T-cell (primary cell): ENCODE measurements at regions of chr1 and their contacts with region 1.

Region 1: GRCh38 chr1:212012034-212012740 is 23.2 kb downstream of the INTS7 start:
- DNase-seq: peak; percentile 14 to 79 (median 50)
- ATAC-seq: peak; percentile 90 to 99 (median 92)
- H3K4me3 ChIP-seq: no peak overlapping the region
- H3K4me3 Mint-ChIP-seq: no peak overlapping the region
- H3K27ac ChIP-seq: no peak overlapping the region
- H3K27ac Mint-ChIP-seq: no peak overlapping the region
- H3K4me1 ChIP-seq: no peaks in the 10 kb centered on the region
- H3K4me1 Mint-ChIP-seq: peaks cover 0 to 2% (median 0%) of the 10 kb centered on the region in 3 donors
- H3K27me3 ChIP-seq: no peaks in the 10 kb centered on the region
- H3K27me3 Mint-ChIP-seq: no peaks in the 10 kb centered on the region

Region 2: GRCh38 chr1:211874521-211875347 is 137.5 kb before region 1 on chr1:
- CTCF ChIA-PET with region 1: no interaction called
- POLR2A ChIA-PET with region 1: no interaction called
- DNase-seq: no peak
- ATAC-seq: no peak
- H3K4me3 ChIP-seq: no peak overlapping the region
- H3K4me3 Mint-ChIP-seq: no peak overlapping the region
- H3K27ac ChIP-seq: no peak overlapping the region
- H3K27ac Mint-ChIP-seq: no peak overlapping the region
- H3K4me1 ChIP-seq: no peaks in the 10 kb centered on the region
- H3K4me1 Mint-ChIP-seq: no peaks in the 10 kb centered on the region
- H3K27me3 ChIP-seq: peaks cover 0 to 10% of the 10 kb centered on the region in 2 experiments
- H3K27me3 Mint-ChIP-seq: peaks cover 8 to 10% of the 10 kb centered on the region in 2 donors

Region 3: DNA sequence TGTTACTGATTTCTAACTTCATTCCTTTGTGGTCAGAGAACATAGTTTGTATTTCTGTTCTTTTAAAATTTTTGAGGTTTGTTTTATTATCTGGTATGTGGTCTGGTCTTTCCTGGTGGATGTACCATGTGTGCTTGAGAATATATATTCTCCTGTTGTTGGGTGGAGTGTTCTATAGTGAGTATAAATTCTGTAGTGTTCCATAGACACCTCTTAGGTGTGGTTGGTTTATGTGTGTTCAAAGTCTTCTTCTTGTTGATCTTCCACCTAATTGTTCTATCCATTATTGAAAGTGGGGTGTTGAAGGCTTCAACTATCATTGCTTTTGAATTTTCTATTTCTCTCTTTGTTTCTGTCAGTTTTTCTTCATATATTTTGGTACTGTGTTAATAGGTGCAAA is 293.2 kb after region 1 on chr1:
- CTCF ChIA-PET with region 1: no interaction called
- POLR2A ChIA-PET with region 1: interaction called in 1 of 2 experiments, 11 read pairs
- DNase-seq: no peak
- ATAC-seq: no peak
- H3K4me3 ChIP-seq: no peak overlapping the region
- H3K4me3 Mint-ChIP-seq: peak overlapping the region in 1 of 3 donors; percentile 39
- H3K27ac ChIP-seq: no peak overlapping the region
- H3K27ac Mint-ChIP-seq: peak overlapping the region in 1 of 2 donors; percentile 30
- H3K4me1 ChIP-seq: peaks cover 3 to 11% of the 10 kb centered on the region in 2 experiments
- H3K4me1 Mint-ChIP-seq: peaks cover 74 to 84% (median 77%) of the 10 kb centered on the region in 3 donors
- H3K27me3 ChIP-seq: no peaks in the 10 kb centered on the region
- H3K27me3 Mint-ChIP-seq: no peaks in the 10 kb centered on the region

Region 4: DNA sequence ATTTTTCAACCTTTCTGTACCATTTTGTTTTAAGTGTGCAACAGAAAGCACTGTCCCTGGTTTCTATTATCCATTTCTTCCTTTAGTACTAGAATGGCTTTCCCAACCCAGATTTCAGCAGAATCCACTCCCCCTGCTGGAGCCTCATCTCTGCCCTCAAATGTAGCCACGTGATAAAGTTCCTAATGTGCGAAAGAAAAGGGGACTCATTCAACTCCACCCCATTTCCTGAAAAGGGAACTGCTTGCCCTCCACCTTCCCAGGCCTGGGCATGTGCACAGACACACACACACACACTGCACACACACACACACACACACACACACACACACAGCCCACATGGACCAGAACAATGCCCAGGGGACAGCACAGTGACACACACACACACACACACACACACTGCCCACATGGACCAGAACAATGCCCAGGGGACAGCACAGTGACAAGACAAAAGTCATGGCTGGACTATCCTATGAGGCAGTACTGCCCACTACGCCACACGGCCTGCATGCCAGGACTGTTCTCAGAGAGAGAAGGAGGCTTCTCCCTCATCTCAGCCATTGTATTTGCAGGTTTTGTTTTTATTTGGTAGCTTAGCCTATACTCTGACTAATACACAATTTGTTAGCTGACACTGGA is 369.3 kb after region 1 on chr1:
- CTCF ChIA-PET with region 1: no interaction called
- POLR2A ChIA-PET with region 1: no interaction called
- DNase-seq: no peak
- ATAC-seq: no peak
- H3K4me3 ChIP-seq: no peak overlapping the region
- H3K4me3 Mint-ChIP-seq: no peak overlapping the region
- H3K27ac ChIP-seq: no peak overlapping the region
- H3K27ac Mint-ChIP-seq: no peak overlapping the region
- H3K4me1 ChIP-seq: peaks cover 0 to 7% of the 10 kb centered on the region in 2 experiments
- H3K4me1 Mint-ChIP-seq: peaks cover 0 to 4% (median 2%) of the 10 kb centered on the region in 3 donors
- H3K27me3 ChIP-seq: no peaks in the 10 kb centered on the region
- H3K27me3 Mint-ChIP-seq: no peaks in the 10 kb centered on the region